ENCODE measurements at regions of chr6 and their contacts with region 1.

Region 1: DNA sequence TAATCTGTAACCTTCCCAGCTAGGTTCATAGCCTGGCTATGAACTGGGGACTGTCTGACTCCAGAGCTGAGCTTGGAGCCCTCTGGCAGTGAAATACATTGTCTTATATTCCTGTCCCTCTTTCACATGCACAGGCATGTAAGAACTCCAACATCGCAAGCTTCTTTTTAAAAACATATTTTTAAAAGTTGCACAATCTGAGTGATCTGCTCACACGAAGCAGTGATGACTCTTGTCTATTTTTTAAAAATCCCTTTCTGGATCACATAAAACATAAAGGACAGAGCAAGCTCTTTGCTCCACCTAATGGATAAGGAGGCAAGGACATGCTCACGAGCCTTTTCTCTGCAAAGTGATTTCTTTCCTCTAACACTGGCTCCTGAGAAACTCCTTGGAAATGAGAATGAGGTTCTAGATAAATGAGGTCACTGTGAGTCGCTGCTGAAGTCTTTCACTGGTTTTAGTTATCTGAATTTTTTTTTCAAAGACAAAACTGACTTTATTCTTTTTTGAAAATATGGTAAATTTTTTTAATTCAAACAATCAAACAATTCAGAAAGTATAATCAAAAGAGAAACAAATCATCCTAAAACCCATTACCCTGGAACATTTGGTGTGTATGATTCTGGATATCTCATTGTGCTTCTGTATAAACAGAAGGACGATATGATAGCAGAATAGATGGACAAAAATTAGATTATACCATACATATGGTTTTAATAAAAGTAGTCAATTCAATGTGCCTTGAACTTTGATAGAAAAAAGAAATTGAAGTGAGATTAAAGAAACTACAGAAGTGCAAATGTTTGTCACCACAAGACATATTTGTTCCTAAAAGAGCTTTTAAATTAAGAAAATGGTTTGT is 30.8 kb downstream of the IL20RA start:
- DNase-seq: no peak
- ATAC-seq: peak in 3 of 4 donors; percentile 68 to 77 (median 72)
- H3K4me3 ChIP-seq: no peak overlapping the region
- H3K27ac ChIP-seq: no peak overlapping the region
- H3K4me1 ChIP-seq: peaks cover 0 to 14% (median 0%) of the 10 kb centered on the region in 12 donors
- H3K27me3 ChIP-seq: peaks cover 0 to 12% (median 0%) of the 10 kb centered on the region in 9 donors
- CTCF ChIP-seq: peak; percentile 25 to 71 (median 55)
- POLR2A ChIP-seq: no peak

Region 2: DNA sequence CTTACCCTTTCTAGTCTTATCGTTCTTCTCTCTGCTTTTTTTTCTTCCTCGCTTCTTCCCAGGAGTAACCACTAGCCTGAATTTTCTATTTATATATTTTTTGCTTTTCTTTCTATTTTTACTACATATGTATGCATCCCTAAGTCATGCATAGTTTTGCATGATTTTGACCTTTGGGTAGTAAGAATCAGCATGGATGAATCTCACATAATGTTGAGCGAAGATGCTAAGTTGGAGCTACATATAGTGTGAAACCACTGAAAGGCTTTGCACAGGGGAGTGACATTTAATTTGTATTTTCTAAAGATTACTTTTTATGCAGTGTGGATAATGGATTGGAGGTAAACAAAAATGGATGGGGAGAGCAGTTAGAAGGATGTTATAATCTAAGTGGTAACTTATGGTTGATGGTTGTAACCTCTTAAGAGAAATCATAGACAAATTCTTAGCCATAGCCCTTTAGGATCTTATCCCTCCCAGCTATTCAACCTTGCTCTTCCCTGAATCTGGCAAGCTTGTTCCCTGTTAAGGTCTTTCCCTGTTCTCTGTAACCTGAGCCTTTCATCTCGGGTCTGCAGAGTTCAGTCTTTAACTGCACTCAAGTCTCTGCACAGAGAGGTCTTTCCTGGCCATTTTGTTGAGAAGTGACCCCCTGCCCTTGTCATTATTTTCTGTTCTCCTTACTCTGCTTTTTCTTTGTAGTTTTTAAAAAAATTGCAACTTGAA is 173.5 kb before region 1 on chr6:
- intact Hi-C with region 1: loop called in 7 of 10 experiments (anchors 5 to 10 kb)
- DNase-seq: no peak
- ATAC-seq: no peak
- H3K4me3 ChIP-seq: no peak overlapping the region
- H3K27ac ChIP-seq: peak overlapping the region in 1 of 12 donors; percentile 12
- H3K4me1 ChIP-seq: peaks cover 0 to 12% (median 0%) of the 10 kb centered on the region in 12 donors
- H3K27me3 ChIP-seq: no peaks in the 10 kb centered on the region
- CTCF ChIP-seq: no peak
- POLR2A ChIP-seq: no peak

Region 3: DNA sequence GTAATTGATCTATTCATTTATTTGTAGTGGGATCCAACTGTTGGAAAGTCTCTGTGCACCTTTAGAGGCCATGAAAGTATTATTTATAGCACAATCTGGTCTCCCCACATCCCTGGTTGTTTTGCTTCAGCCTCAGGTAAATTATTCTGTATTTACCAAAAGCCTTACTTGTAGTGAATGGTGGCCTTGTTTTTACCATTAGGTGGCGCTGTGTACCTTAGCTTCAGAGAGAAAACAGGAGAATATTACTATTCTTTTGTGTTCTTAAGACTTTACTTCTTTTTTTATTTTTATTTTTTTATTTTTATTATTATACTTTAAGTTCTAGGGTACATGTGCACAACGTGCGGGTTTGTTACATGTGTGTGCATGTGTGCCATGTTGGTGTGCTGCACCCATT is 167.9 kb before region 1 on chr6:
- intact Hi-C with region 1: loop called in 7 of 10 experiments (anchors 5 to 10 kb)
- DNase-seq: peak in 1 of 5 donors; percentile 25
- ATAC-seq: peak in 2 of 4 donors; percentile 55
- H3K4me3 ChIP-seq: no peak overlapping the region
- H3K27ac ChIP-seq: no peak overlapping the region
- H3K4me1 ChIP-seq: peaks cover 0 to 12% (median 0%) of the 10 kb centered on the region in 12 donors
- H3K27me3 ChIP-seq: no peaks in the 10 kb centered on the region
- CTCF ChIP-seq: peak; percentile 60 to 83 (median 72)
- POLR2A ChIP-seq: no peak

Region 4: DNA sequence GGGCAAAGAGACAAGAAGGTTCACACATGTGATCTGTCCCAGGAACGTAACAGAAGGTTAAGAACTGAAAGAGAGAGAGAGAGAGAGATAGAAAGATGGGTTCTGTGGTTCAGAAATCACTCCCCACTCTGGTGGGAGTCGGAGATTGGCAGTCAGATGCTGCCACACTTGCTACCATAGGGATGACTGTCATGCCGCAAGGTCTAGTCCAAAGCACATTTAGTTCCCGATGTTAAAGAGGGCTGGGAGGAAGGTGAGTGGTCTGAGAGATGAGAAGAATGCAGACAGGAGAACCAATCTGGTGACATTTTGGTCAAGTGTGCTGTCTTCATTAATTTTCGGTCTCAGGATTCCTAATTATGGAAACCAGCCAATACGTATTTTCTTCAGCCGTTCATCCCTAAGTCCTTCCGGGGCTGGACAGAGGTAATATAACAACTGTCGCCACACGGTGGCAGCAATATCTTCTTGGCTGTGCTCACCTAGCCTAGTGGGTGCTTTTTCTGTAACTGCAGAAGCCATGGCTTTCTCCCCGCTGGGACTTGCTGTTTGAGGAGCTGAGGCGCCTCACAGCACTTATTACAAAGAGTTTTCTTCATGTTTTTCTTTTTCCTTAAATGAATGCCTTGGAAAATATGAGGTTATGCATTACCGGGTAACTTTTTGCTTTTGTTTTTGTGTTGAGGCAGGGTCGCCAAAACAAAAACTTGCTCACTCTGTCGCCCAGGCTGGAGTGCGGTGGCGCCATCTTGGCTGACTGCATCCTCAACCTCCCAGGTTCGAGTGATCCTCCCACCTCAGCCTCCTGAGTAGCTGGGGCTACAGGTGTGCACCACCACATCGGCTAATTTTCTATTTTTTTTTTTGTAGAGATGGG is 45.9 kb before region 1 on chr6:
- intact Hi-C with region 1: loop called in 6 of 10 experiments (anchors 1 to 10 kb)
- DNase-seq: peak; percentile 49 to 77 (median 65)
- ATAC-seq: peak in 3 of 4 donors; percentile 71 to 76 (median 74)
- H3K4me3 ChIP-seq: no peak overlapping the region
- H3K27ac ChIP-seq: peak overlapping the region in 6 of 12 donors; percentile 37 to 79 (median 59)
- H3K4me1 ChIP-seq: peaks cover 0 to 19% (median 2%) of the 10 kb centered on the region in 12 donors
- H3K27me3 ChIP-seq: peaks cover 0 to 5% (median 0%) of the 10 kb centered on the region in 9 donors
- CTCF ChIP-seq: peak; percentile 46 to 71 (median 60)
- POLR2A ChIP-seq: no peak

Region 5: GRCh38 chr6:136975089-136975715 is 38.8 kb before region 1 on chr6:
- intact Hi-C with region 1: loop called in 1 of 10 experiments (anchors 5 kb)
- DNase-seq: no peak
- ATAC-seq: no peak
- H3K4me3 ChIP-seq: no peak overlapping the region
- H3K27ac ChIP-seq: no peak overlapping the region
- H3K4me1 ChIP-seq: peaks cover 0 to 5% (median 0%) of the 10 kb centered on the region in 12 donors
- H3K27me3 ChIP-seq: no peaks in the 10 kb centered on the region
- CTCF ChIP-seq: no peak
- POLR2A ChIP-seq: no peak

Measured in heart left ventricle (tissue), 16 donors.